PC-3 (cell line): ENCODE measurements at regions of chr4 and their contacts with region 1.

Region 1: DNA sequence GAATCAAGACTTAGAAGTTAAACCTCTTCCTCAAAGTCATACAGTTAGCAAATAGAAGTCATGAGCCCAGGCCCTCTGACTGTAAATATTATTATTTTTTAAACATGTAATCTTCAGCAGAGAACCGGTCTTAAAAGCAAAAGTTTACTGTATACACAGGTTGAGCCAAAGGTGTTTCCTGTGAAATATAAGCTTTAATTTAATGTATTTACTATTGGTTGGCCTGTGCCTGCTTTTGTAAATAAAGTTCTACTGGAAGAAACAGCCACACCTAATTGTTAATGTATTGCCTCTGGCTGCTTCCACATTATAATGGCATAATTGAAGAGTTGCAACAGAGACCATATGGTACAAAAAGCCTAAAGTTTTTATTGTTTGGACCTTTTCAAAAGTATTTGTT is 61.0 kb upstream of the PRDM8 start:
- DNase-seq: peak; percentile 68
- ATAC-seq: peak; percentile 80
- H3K4me3 ChIP-seq: no peak overlapping the region
- H3K27ac ChIP-seq: peak overlapping the region; percentile 97
- H3K4me1 ChIP-seq: peaks cover 54% of the 10 kb centered on the region
- H3K27me3 ChIP-seq: no peaks in the 10 kb centered on the region
- CTCF ChIP-seq: no peak

Region 2: GRCh38 chr4:80097400-80098177 is 38.7 kb before region 1 on chr4:
- CTCF ChIA-PET with region 1: no interaction called
- POLR2A ChIA-PET with region 1: interaction called, 9 read pairs
- intact Hi-C with region 1: loop called (anchors 1 kb)
- DNase-seq: peak; percentile 88
- ATAC-seq: peak; percentile 77
- H3K4me3 ChIP-seq: peak overlapping the region; percentile 14; the same call in 1 of the 2 replicates
- H3K27ac ChIP-seq: peak overlapping the region; percentile 83
- H3K4me1 ChIP-seq: peaks cover 59% of the 10 kb centered on the region
- H3K27me3 ChIP-seq: no peaks in the 10 kb centered on the region
- CTCF ChIP-seq: no peak

Region 3: GRCh38 chr4:80184053-80184790 is 48.0 kb after region 1 on chr4:
- CTCF ChIA-PET with region 1: no interaction called
- POLR2A ChIA-PET with region 1: no interaction called
- intact Hi-C with region 1: loop called (anchors 2 kb)
- DNase-seq: peak; percentile 85
- ATAC-seq: peak; percentile 80
- H3K4me3 ChIP-seq: peak overlapping the region; percentile 98
- H3K27ac ChIP-seq: peak overlapping the region; percentile 71
- H3K4me1 ChIP-seq: peaks cover 21% of the 10 kb centered on the region
- H3K27me3 ChIP-seq: no peaks in the 10 kb centered on the region
- CTCF ChIP-seq: peak; percentile 76

Region 4: GRCh38 chr4:80221161-80221560 is 84.9 kb after region 1 on chr4:
- CTCF ChIA-PET with region 1: no interaction called
- POLR2A ChIA-PET with region 1: no interaction called
- intact Hi-C with region 1: no loop called
- DNase-seq: peak; percentile 55
- ATAC-seq: no peak
- H3K4me3 ChIP-seq: no peak overlapping the region
- H3K27ac ChIP-seq: no peak overlapping the region
- H3K4me1 ChIP-seq: peaks cover 25% of the 10 kb centered on the region
- H3K27me3 ChIP-seq: no peaks in the 10 kb centered on the region
- CTCF ChIP-seq: peak; percentile 45